ENCODE measurements at regions of chr1 and their contacts with region 1.

Region 1: DNA sequence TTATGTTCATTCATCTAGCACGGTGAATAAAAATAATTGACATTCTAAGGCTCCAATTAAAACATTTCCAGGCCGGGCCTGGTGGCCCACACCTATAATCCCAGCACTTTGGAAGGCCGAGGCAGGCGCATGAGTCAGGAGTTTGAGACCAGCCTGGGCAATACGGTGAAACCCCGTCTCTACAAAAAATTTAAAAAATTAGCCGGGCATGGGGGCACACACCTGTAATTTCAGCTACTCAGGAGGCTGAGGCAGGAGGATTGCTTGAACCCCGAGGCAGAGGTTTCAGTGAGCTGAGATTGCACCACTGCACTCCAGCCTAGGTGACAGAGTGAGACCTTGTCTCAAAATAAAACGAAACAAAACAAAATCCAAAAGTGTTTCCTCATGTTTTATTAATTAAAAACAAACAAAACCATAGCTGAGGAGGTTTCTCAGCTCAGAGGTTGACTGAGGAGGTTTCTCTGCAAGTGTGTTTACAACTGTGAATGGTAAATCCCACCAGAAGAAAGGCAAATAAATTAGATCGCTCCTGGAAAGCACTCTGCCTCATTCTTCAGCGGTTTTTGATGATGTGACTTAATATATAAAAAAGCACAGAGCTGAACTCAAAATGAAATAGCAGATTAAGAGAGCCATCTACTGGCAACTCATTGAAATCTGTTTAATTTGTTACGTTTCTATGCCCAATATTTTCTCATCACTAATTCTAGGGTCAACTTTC is 37.7 kb upstream of the ATG4C start:
- H3K4me3 ChIP-seq: no peak overlapping the region
- H3K27ac ChIP-seq: no peak overlapping the region
- H3K4me1 ChIP-seq: no peaks in the 10 kb centered on the region
- CTCF ChIP-seq: 0 out of 2 replicates have a peak, but pooled peaks have one; percentile 21

Region 2: DNA sequence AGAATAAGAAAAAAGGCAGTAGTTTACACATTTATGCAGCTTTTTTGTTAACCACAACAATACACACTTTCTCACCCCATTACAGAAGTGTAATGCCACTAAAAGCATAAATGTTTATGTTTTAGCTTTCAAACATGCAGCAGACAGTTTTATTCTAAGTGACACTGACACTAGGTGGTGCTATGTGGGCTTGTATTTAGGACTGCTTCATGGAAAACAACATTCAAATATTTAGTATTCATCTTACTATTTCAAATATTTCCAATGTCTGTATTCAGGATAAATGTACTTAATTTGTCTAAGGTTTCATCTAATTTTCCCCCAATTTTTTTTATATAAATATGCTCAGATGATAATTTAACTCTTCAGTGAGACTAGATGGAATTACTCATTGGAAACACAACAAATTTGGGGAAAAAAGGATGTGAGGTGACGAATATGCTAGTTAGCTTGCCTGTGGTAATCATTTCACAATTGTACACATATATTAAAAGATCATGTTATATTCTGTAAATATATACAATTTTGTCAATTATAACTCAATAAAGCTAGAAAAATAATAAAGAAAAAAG is 238.0 kb before region 1 on chr1:
- CTCF ChIA-PET with region 1: interaction called, 40 read pairs
- POLR2A ChIA-PET with region 1: no interaction called
- H3K4me3 ChIP-seq: no peak overlapping the region
- H3K27ac ChIP-seq: no peak overlapping the region
- H3K4me1 ChIP-seq: no peaks in the 10 kb centered on the region
- CTCF ChIP-seq: no peak

Region 3: GRCh38 chr1:62530516-62531154 is 215.6 kb before region 1 on chr1:
- CTCF ChIA-PET with region 1: interaction called, 80 read pairs
- POLR2A ChIA-PET with region 1: no interaction called
- H3K4me3 ChIP-seq: no peak overlapping the region
- H3K27ac ChIP-seq: no peak overlapping the region
- H3K4me1 ChIP-seq: no peaks in the 10 kb centered on the region
- CTCF ChIP-seq: peak; percentile 69

Region 4: DNA sequence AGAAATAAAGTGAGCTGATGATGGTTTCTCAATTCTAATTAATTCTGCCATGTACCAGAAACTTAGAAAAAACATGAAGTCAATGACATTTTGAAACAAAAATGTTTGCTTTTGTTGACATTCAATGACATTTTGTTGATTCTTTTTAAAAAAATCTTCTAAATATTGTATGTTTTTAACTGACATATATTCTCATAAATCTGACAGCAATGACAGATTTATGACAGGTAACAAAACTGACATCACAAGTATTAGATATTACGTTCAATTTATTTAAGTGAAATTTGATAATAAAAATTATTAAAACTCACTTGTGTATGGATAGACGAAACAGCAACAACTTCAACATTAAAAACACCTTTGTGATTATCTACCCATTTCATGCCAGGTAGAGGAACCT is 184.9 kb before region 1 on chr1:
- CTCF ChIA-PET with region 1: no interaction called
- POLR2A ChIA-PET with region 1: no interaction called
- H3K4me3 ChIP-seq: no peak overlapping the region
- H3K27ac ChIP-seq: no peak overlapping the region
- H3K4me1 ChIP-seq: no peaks in the 10 kb centered on the region
- CTCF ChIP-seq: no peak

Region 5: GRCh38 chr1:62735491-62736171 is 10.6 kb before region 1 on chr1:
- CTCF ChIA-PET with region 1: interaction called, 14 read pairs
- POLR2A ChIA-PET with region 1: interaction called, 3 read pairs
- H3K4me3 ChIP-seq: no peak overlapping the region
- H3K27ac ChIP-seq: no peak overlapping the region
- H3K4me1 ChIP-seq: no peaks in the 10 kb centered on the region
- CTCF ChIP-seq: no peak

Region 6: GRCh38 chr1:63112155-63112900 is 366.1 kb after region 1 on chr1:
- CTCF ChIA-PET with region 1: no interaction called
- POLR2A ChIA-PET with region 1: no interaction called
- H3K4me3 ChIP-seq: no peak overlapping the region
- H3K27ac ChIP-seq: no peak overlapping the region
- H3K4me1 ChIP-seq: no peaks in the 10 kb centered on the region
- CTCF ChIP-seq: no peak